ENCODE measurements at regions of chr21 and their contacts with region 1.

Region 1: GRCh38 chr21:36976882-36977651 is 10.6 kb upstream of the HLCS start:
- DNase-seq: peak; percentile 76
- ATAC-seq: peak; percentile 88
- H3K4me3 ChIP-seq: no peak overlapping the region
- H3K4me3 Mint-ChIP-seq: peak overlapping the region; percentile 47
- H3K27ac ChIP-seq: no peak overlapping the region
- H3K27ac Mint-ChIP-seq: peak overlapping the region; percentile 77
- H3K4me1 ChIP-seq: peaks cover 16 to 22% of the 10 kb centered on the region in 2 donors
- H3K4me1 Mint-ChIP-seq: peaks cover 24% of the 10 kb centered on the region
- H3K27me3 ChIP-seq: peaks cover 0 to 13% (median 5%) of the 10 kb centered on the region in 4 experiments
- H3K27me3 Mint-ChIP-seq: peaks cover 3% of the 10 kb centered on the region
- CTCF ChIP-seq: peak; percentile 72

Region 2: DNA sequence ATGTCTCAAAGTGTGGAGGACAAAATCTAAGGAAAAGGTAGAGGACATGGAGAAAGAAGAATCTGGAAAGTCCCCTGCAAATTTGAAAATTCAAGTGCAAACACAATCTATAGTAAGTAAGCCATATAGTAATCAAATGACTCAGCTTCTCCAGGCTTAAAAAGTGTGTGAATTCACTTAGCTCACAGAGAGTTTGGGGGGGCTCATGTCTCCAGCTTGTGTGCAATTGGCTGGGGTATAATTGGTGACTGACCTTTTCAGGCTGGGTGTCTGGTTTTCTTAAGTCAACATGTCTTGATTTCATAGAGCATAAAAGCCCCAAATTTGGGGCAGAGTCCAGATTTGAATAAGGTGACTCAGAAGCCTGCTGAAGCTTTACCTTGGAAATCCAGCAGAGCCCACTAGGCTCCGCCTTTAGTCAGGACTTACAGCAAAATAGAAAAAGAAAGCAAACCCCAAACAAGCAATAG is 505.8 kb before region 1 on chr21:
- CTCF ChIA-PET with region 1: no interaction called
- POLR2A ChIA-PET with region 1: interaction called, 12 read pairs
- intact Hi-C with region 1: no loop called
- DNase-seq: no peak
- ATAC-seq: no peak
- H3K4me3 ChIP-seq: no peak overlapping the region
- H3K4me3 Mint-ChIP-seq: no peak overlapping the region
- H3K27ac ChIP-seq: no peak overlapping the region
- H3K27ac Mint-ChIP-seq: no peak overlapping the region
- H3K4me1 ChIP-seq: no peaks in the 10 kb centered on the region
- H3K4me1 Mint-ChIP-seq: no peaks in the 10 kb centered on the region
- H3K27me3 ChIP-seq: no peaks in the 10 kb centered on the region
- H3K27me3 Mint-ChIP-seq: peaks cover 12% of the 10 kb centered on the region
- CTCF ChIP-seq: no peak

Region 3: GRCh38 chr21:36934864-36935420 is 42.1 kb before region 1 on chr21:
- CTCF ChIA-PET with region 1: no interaction called
- POLR2A ChIA-PET with region 1: no interaction called
- intact Hi-C with region 1: no loop called
- DNase-seq: no peak
- ATAC-seq: no peak
- H3K4me3 ChIP-seq: no peak overlapping the region
- H3K4me3 Mint-ChIP-seq: no peak overlapping the region
- H3K27ac ChIP-seq: no peak overlapping the region
- H3K27ac Mint-ChIP-seq: no peak overlapping the region
- H3K4me1 ChIP-seq: no peaks in the 10 kb centered on the region
- H3K4me1 Mint-ChIP-seq: no peaks in the 10 kb centered on the region
- H3K27me3 ChIP-seq: no peaks in the 10 kb centered on the region
- H3K27me3 Mint-ChIP-seq: no peaks in the 10 kb centered on the region
- CTCF ChIP-seq: no peak

Region 4: GRCh38 chr21:36966066-36966820 is 10.8 kb before region 1 on chr21 and contains the start of gene HLCS:
- CTCF ChIA-PET with region 1: interaction called, 10 read pairs
- POLR2A ChIA-PET with region 1: no interaction called
- intact Hi-C with region 1: loop called (anchors 1 kb)
- DNase-seq: peak; percentile 87
- ATAC-seq: peak; percentile 90
- H3K4me3 ChIP-seq: peak within 1 kb of the TSS in 4 of 5 experiments; percentile 43 to 73 (median 69)
- H3K4me3 Mint-ChIP-seq: peak within 1 kb of the TSS; percentile 92
- H3K27ac ChIP-seq: peak within 1 kb of the TSS; percentile 39 to 81
- H3K27ac Mint-ChIP-seq: peak within 1 kb of the TSS; percentile 89
- H3K4me1 ChIP-seq: peaks cover 13 to 16% of the 10 kb centered on the region in 2 donors
- H3K4me1 Mint-ChIP-seq: peaks cover 15% of the 10 kb centered on the region
- H3K27me3 ChIP-seq: no peaks in the 10 kb centered on the region
- H3K27me3 Mint-ChIP-seq: no peaks in the 10 kb centered on the region
- CTCF ChIP-seq: peak; percentile 22
- total RNA-seq, gene HLCS: 14.7 and 16.2 TPM in 2 replicates

Region 5: DNA sequence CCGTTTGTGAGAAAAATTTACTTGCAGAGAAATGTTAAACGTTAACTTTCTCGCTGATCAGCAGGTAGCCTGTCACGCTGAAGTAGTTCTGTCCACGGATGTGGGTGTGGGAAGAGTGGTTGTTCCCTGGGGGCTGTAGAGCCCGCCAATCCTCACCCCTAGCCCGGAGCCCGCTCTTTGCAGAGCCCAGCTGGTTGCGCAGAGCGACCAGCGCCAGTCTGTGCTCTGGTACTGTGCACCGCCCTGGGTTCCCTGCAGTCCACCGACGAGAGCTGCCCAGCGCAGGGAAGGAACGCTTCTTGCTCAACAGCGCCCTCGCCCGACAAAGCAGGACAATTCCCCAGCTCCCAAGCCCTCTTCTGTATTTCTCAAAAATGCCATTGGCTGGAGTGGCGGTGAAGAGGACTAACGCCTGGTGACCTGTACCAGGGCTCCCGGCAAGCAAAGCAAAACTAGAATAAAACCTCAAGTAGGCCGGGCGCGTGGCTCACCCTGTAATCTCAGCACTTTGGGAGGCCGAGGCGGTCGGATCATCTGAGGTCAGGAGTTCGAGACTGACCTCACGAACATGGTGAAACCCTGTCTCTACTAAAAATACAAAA is 32.8 kb after region 1 on chr21:
- CTCF ChIA-PET with region 1: interaction called, 15 read pairs
- POLR2A ChIA-PET with region 1: no interaction called
- intact Hi-C with region 1: loop called (anchors 1 kb)
- DNase-seq: peak; percentile 76
- ATAC-seq: peak; percentile 90
- H3K4me3 ChIP-seq: peak overlapping the region in 4 of 5 experiments; percentile 2 to 54 (median 27)
- H3K4me3 Mint-ChIP-seq: peak overlapping the region; percentile 64
- H3K27ac ChIP-seq: no peak overlapping the region
- H3K27ac Mint-ChIP-seq: no peak overlapping the region
- H3K4me1 ChIP-seq: peaks cover 27 to 33% of the 10 kb centered on the region in 2 donors
- H3K4me1 Mint-ChIP-seq: peaks cover 18% of the 10 kb centered on the region
- H3K27me3 ChIP-seq: peaks cover 0 to 58% (median 26%) of the 10 kb centered on the region in 4 experiments
- H3K27me3 Mint-ChIP-seq: peaks cover 55% of the 10 kb centered on the region
- CTCF ChIP-seq: peak; percentile 81

Region 6: GRCh38 chr21:37072988-37073416 is 95.9 kb after region 1 on chr21 and contains the starts of genes PIGP and TTC3:
- CTCF ChIA-PET with region 1: interaction called, 3 read pairs
- POLR2A ChIA-PET with region 1: no interaction called
- intact Hi-C with region 1: loop called (anchors 1 kb)
- DNase-seq: peak; percentile 98
- ATAC-seq: peak; percentile 67
- H3K4me3 ChIP-seq: peak within 1 kb of the TSS; percentile 80 to 92 (median 86)
- H3K4me3 Mint-ChIP-seq: peak within 1 kb of the TSS; percentile 98
- H3K27ac ChIP-seq: peak within 1 kb of the TSS; percentile 98
- H3K27ac Mint-ChIP-seq: peak within 1 kb of the TSS; percentile 99
- H3K4me1 ChIP-seq: peaks cover 22 to 23% of the 10 kb centered on the region in 2 donors
- H3K4me1 Mint-ChIP-seq: peaks cover 46% of the 10 kb centered on the region
- H3K27me3 ChIP-seq: no peaks in the 10 kb centered on the region
- H3K27me3 Mint-ChIP-seq: no peaks in the 10 kb centered on the region
- CTCF ChIP-seq: no peak
- total RNA-seq, gene PIGP: 21.7 and 22.7 TPM in 2 replicates
- total RNA-seq, gene TTC3: 163 and 191 TPM in 2 replicates

Region 7: DNA sequence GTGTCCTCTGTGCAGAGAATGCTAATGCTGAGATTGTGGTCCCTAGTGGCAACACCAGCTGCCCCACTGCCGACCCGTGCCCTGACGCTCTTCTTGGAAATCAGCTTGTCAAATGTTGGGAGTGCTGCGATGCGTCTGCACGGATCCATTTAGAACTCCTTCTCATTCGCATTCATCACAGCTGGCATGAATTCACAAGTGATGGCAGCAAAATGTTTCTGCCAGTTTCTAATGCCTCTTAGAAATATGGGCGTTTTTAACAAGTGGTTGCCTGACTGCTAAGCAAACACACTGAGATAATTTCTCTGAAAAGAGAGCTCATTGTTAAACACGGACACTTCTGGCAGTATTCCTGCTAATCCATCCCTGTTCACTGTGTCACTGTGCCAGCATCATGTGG is 1071.1 kb after region 1 on chr21:
- CTCF ChIA-PET with region 1: no interaction called
- POLR2A ChIA-PET with region 1: no interaction called
- intact Hi-C with region 1: no loop called
- DNase-seq: no peak
- ATAC-seq: no peak
- H3K4me3 ChIP-seq: no peak overlapping the region
- H3K4me3 Mint-ChIP-seq: no peak overlapping the region
- H3K27ac ChIP-seq: no peak overlapping the region
- H3K27ac Mint-ChIP-seq: no peak overlapping the region
- H3K4me1 ChIP-seq: no peaks in the 10 kb centered on the region
- H3K4me1 Mint-ChIP-seq: no peaks in the 10 kb centered on the region
- H3K27me3 ChIP-seq: no peaks in the 10 kb centered on the region
- H3K27me3 Mint-ChIP-seq: no peaks in the 10 kb centered on the region
- CTCF ChIP-seq: no peak

Region 8: GRCh38 chr21:38956856-38957571 is 1979.9 kb after region 1 on chr21:
- CTCF ChIA-PET with region 1: no interaction called
- POLR2A ChIA-PET with region 1: no interaction called
- intact Hi-C with region 1: no loop called
- DNase-seq: no peak
- ATAC-seq: no peak
- H3K4me3 ChIP-seq: no peak overlapping the region
- H3K4me3 Mint-ChIP-seq: no peak overlapping the region
- H3K27ac ChIP-seq: no peak overlapping the region
- H3K27ac Mint-ChIP-seq: no peak overlapping the region
- H3K4me1 ChIP-seq: no peaks in the 10 kb centered on the region
- H3K4me1 Mint-ChIP-seq: no peaks in the 10 kb centered on the region
- H3K27me3 ChIP-seq: no peaks in the 10 kb centered on the region
- H3K27me3 Mint-ChIP-seq: peaks cover 13% of the 10 kb centered on the region
- CTCF ChIP-seq: no peak

Measured in B cell (primary cell).